Caco-2 (cell line): ENCODE measurements at regions of chr17 and their contacts with region 1.

Region 1: GRCh38 chr17:57370037-57370581 is 113.8 kb downstream of the MSI2 start:
- DNase-seq: peak; percentile 76 to 84
- H3K4me3 ChIP-seq: no peak overlapping the region
- H3K4me3 Mint-ChIP-seq: peak overlapping the region; percentile 30
- H3K27ac Mint-ChIP-seq: peak overlapping the region; percentile 96
- H3K4me1 ChIP-seq: peaks cover 97% of the 10 kb centered on the region
- H3K4me1 Mint-ChIP-seq: peaks cover 69% of the 10 kb centered on the region
- H3K27me3 ChIP-seq: no peaks in the 10 kb centered on the region
- H3K27me3 Mint-ChIP-seq: no peaks in the 10 kb centered on the region
- CTCF ChIP-seq: no peak

Region 2: DNA sequence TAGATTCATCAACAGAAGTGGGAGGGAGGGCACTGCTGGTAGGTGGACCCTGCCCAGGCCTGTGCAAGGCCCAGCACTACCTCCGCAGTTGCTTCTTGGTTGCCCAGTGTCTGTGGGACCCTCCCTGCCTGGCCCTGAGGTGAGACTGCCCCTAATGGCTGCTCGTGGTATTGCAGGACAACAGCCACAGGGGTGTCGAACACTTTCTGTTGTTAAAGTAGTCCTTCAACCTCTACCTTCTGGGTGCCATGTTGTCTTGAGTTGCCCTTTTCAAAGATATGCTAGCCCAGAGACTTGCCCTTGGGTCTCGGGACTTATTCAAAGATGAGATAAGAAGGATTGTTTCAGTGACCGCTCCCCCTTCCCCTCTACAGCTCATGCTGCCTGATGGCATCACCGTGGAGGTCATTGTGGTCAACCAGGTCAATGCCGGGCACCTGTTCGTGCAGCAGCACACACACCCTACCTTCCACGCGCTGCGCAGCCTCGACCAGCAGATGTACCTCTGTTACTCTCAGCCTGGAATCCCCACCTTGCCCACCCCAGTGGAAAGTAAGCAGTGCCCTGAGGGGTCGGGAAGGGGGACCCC is 255.9 kb before region 1 on chr17:
- CTCF ChIA-PET with region 1: no interaction called
- POLR2A ChIA-PET with region 1: no interaction called
- intact Hi-C with region 1: no loop called
- DNase-seq: peak; percentile 69 to 77
- H3K4me3 ChIP-seq: no peak overlapping the region
- H3K4me3 Mint-ChIP-seq: no peak overlapping the region
- H3K27ac Mint-ChIP-seq: no peak overlapping the region
- H3K4me1 ChIP-seq: no peaks in the 10 kb centered on the region
- H3K4me1 Mint-ChIP-seq: no peaks in the 10 kb centered on the region
- H3K27me3 ChIP-seq: no peaks in the 10 kb centered on the region
- H3K27me3 Mint-ChIP-seq: no peaks in the 10 kb centered on the region
- CTCF ChIP-seq: peak; percentile 82 to 94

Region 3: DNA sequence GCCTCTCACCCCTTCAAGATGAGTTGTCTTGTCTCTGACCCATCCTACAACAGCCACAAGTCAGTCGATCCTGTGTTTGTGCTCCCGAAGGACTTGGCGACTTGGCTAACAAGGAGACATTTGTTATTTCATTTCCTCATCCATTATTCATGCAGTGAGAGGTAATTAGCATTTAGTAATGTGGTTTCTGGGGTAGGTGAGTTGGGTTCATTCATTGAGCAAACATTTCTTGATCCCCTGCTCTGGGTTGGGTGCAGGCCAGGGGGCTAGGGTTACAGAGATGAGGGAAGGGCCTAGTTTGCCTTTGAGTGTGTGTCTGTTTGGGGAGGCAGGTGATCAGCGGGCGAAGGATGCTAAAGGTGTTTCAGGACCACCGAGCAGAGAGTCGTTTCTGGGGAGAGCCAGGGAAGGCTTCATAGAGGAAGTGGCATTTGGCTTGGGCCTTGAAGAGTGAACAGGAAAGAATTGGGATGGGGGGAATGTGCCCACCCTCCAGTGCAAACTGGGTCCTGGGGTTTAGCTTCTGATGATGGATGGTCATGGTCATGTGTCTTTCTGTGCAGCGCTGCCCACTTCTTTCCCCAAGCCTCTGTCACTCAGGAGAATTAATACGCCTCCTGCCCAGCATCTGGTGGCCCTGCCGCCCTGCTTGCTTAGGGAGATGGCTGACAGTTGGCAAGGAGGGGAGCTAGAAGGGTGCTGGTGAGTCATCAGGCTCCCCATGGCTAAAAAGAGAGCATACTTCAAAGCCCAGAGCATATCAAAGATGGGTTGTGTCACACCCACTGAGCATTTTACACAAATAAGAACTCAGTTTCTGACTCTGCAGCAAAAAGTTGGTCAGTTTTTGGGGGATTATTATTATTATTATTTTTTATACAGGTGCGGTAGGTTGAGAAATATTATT is 75.2 kb before region 1 on chr17:
- CTCF ChIA-PET with region 1: no interaction called
- POLR2A ChIA-PET with region 1: no interaction called
- intact Hi-C with region 1: loop called (anchors 2 kb)
- DNase-seq: peak; percentile 35 to 62
- H3K4me3 ChIP-seq: no peak overlapping the region
- H3K4me3 Mint-ChIP-seq: peak overlapping the region; percentile 34
- H3K27ac Mint-ChIP-seq: peak overlapping the region; percentile 86
- H3K4me1 ChIP-seq: peaks cover 48% of the 10 kb centered on the region
- H3K4me1 Mint-ChIP-seq: peaks cover 57% of the 10 kb centered on the region
- H3K27me3 ChIP-seq: no peaks in the 10 kb centered on the region
- H3K27me3 Mint-ChIP-seq: no peaks in the 10 kb centered on the region
- CTCF ChIP-seq: no peak

Region 4: DNA sequence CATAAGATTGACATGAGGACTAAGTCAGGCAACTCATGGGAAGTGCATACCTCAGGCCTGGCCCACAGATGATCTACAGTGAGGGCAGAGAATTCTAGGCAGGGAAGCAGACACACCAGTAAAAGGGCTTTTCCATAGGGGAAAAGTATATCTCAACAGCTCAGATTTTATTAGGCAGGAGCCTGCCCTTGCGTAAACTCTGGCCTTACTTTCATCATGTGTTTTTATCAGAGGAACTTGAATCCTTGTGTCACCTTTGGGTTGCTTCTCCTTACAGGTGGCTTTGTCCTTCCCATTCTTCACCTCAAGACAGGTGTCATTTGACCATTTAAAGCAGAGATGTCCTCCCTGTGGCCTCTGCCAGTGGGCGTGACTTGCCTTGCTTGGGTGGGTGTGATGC is 24.3 kb after region 1 on chr17:
- CTCF ChIA-PET with region 1: no interaction called
- POLR2A ChIA-PET with region 1: no interaction called
- intact Hi-C with region 1: loop called (anchors 1 kb)
- DNase-seq: peak; percentile 50 to 57
- H3K4me3 ChIP-seq: no peak overlapping the region
- H3K4me3 Mint-ChIP-seq: no peak overlapping the region
- H3K27ac Mint-ChIP-seq: peak overlapping the region; percentile 20
- H3K4me1 ChIP-seq: peaks cover 15% of the 10 kb centered on the region
- H3K4me1 Mint-ChIP-seq: peaks cover 18% of the 10 kb centered on the region
- H3K27me3 ChIP-seq: no peaks in the 10 kb centered on the region
- H3K27me3 Mint-ChIP-seq: no peaks in the 10 kb centered on the region
- CTCF ChIP-seq: no peak

Region 5: GRCh38 chr17:57440522-57441485 is 70.7 kb after region 1 on chr17:
- CTCF ChIA-PET with region 1: no interaction called
- POLR2A ChIA-PET with region 1: no interaction called
- intact Hi-C with region 1: loop called (anchors 5 kb)
- DNase-seq: no peak
- H3K4me3 ChIP-seq: no peak overlapping the region
- H3K4me3 Mint-ChIP-seq: no peak overlapping the region
- H3K27ac Mint-ChIP-seq: peak overlapping the region; percentile 78
- H3K4me1 ChIP-seq: peaks cover 61% of the 10 kb centered on the region
- H3K4me1 Mint-ChIP-seq: peaks cover 65% of the 10 kb centered on the region
- H3K27me3 ChIP-seq: no peaks in the 10 kb centered on the region
- H3K27me3 Mint-ChIP-seq: no peaks in the 10 kb centered on the region
- CTCF ChIP-seq: no peak

Region 6: DNA sequence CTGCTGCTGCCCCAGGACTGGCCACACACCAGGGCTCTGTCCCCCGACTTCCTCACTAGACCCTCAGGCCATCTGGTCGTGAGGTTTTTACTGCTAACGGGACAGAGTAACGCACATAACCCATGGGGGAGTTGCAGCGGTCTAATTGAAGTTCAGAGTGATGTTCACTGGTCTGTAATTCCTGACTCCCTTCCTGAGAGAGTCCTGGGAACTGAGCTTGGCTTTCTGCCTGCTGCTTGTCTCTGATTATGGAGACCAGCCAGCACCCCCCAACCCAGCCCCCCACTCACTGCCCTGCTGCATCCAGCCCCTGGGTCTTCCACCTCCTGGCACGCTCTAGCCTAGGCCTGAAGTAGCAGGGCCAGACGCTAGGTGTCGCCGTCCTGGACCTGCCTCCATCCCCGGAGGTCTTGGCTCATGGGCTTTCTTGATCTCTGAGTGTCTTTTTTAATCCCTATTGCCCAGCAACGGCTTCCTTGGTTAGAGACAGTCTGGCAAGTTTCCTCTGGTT is 182.1 kb after region 1 on chr17:
- CTCF ChIA-PET with region 1: no interaction called
- POLR2A ChIA-PET with region 1: no interaction called
- intact Hi-C with region 1: no loop called
- DNase-seq: no peak
- H3K4me3 ChIP-seq: no peak overlapping the region
- H3K4me3 Mint-ChIP-seq: no peak overlapping the region
- H3K27ac Mint-ChIP-seq: no peak overlapping the region
- H3K4me1 ChIP-seq: peaks cover 32% of the 10 kb centered on the region
- H3K4me1 Mint-ChIP-seq: peaks cover 32% of the 10 kb centered on the region
- H3K27me3 ChIP-seq: no peaks in the 10 kb centered on the region
- H3K27me3 Mint-ChIP-seq: no peaks in the 10 kb centered on the region
- CTCF ChIP-seq: no peak